ENCODE measurements at regions of chr16 and their contacts with region 1.

Region 1: DNA sequence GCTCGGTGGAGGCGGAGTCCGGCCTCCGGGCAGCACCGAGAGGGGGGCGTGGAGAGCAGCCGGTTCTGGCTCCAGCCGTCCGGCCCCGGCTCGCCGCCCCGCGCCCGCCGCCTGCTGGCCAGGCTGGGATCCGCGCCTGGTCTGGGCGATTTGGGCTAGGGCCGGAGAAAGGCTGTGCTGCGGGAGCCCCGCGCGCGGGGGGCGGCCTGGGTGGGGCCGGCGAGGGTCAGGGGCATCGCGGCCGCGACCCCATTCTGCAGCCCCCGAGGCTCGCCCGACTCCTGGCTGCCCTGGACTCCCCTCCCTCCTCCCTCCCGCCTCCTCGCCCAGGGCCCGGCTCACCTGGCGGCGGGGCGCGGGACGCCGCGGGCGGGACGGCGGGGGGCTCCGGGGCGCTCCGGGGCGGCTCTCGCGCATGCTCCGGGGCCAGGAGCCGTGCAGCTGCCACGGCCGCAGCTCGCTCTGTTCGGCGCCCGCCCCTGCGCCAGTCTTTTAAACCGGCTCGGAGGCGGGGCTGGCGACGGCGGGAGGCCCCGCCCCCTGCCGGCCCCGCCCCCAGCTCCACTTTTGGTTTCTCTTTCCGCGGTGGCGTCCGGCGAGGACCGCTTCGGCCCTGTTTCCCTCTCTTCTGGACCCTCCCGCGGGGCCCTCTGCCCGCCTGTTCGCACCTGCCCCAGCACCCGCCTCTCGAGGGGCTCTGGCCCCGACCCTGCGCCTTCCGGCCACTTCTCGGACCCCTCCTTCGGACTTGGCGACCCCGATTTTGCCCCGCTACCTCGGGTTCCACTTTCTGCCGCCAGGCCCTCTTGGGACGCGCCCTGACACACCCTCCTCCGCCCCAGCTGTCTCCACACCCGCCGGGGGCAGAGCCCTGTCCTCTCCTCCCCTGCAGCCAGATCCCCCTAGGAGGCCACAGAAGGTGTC is at the start of gene SOCS1:
- DNase-seq: peak; percentile 40 to 93 (median 84)

Region 2: DNA sequence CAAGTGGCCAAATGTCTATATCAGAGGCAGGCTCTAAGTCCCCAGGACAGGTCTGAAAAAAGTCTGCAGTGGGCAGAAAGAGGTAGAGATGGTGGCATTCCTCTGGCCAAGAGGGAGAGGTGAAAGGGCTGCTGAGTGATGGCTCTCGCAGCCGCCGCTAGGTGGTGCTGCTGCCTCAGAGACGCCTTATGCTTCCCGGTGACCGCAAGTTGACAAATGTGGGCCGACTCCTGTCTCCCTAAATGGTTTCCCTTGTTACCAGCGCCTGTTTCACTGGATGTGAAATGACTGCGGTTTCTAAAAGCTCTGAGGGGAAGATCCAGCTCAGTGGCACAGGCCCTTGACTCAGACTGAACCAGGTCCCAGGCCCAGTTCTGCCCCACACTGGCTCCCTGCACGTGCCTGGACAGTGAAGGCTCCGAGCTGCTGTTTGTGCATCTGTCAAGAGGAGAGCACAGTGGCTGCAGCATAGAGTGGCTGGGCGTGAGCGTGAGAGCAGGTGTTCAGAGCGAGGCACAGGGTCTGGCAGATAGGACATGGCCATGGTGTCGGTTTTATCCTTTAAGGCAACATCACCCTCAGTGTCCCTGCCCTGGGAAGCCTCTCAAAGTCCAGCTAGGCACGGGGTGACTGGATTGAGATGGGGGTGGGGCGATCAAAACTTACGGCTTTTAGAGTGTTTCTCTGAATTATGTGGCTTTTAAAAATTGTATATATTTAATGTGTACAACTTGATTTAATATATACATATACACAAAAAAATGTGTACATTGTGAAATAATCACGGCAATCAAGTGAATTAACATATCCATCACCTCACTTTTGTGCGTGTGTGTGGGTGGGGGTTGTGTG is 291.7 kb before region 1 on chr16:
- intact Hi-C with region 1: loop called (anchors 5 kb)
- DNase-seq: peak; percentile 64 to 94 (median 87)

Region 3: GRCh38 chr16:11345040-11345862 is 89.3 kb after region 1 on chr16 and contains the start of gene RMI2:
- intact Hi-C with region 1: loop called (anchors 2 kb)
- DNase-seq: peak; percentile 90 to 98 (median 96)

Measured in head of caudate nucleus (tissue), 42 donors.